Activated CD8-positive, alpha-beta T cell treated with anti-CD3 and anti-CD28 coated beads, Interleukin-2, amount 10 ng/mL, durations not matched to agents 7 days and 5 days (primary cell): ENCODE measurements at regions of chr16 and their contacts with region 1.

Region 1: GRCh38 chr16:84055366-84055765 is 12.8 kb upstream of the SLC38A8 start:
- DNase-seq: no peak
- ATAC-seq: no peak
- H3K4me3 Mint-ChIP-seq: no peak overlapping the region
- H3K27ac Mint-ChIP-seq: no peak overlapping the region
- H3K4me1 Mint-ChIP-seq: no peaks in the 10 kb centered on the region
- H3K27me3 Mint-ChIP-seq: no peaks in the 10 kb centered on the region

Region 2: DNA sequence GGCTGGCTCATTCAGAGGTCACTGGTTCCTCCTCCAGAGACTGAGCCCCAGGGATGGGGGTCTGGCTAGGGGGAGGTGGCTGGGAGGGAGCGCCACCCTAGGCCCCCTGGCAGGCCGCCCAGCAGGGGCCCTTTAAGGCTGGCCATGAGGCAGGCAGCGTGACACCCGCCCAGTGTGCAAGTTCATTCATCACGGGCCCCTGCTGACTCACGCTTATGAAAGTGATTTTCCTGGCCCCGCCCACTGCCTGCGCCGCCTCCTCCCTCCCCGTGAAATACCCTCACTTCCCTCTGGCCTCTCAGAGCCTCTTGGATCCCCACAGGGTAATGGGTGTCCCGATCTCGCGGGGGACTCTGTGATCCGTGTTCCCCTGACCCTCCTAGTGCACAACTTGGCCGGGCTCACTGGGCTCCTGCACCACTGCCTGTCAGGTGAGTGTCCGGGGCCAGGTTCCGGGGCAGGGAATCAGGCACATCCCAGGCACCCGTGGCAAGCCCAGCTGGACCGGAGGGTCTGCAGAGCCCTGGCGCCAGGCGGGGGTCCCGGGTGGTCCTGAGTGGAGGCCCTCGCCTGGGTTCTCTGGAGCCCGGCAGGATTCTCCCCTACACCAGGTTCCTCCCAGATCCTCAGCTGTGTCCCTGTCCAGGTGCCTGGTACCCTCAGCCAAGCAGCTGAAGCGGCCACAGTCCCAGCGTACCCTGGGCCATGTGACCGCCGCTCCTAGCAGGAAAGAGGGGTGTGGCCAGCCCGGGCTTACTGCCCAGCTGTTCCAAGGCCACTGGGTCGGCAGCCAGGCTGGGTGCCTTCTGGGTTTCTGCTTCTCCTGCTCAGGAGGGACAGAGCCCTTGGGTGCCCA is 102.2 kb before region 1 on chr16 and contains the start of gene OSGIN1:
- CTCF ChIA-PET with region 1: interaction called, 11 read pairs
- POLR2A ChIA-PET with region 1: no interaction called
- DNase-seq: peak; percentile 78
- ATAC-seq: peak; percentile 84
- H3K4me3 Mint-ChIP-seq: peak within 1 kb of the TSS; percentile 48
- H3K27ac Mint-ChIP-seq: no peak within 1 kb of the TSS
- H3K4me1 Mint-ChIP-seq: peaks cover 11% of the 10 kb centered on the region
- H3K27me3 Mint-ChIP-seq: peaks cover 5% of the 10 kb centered on the region
- total RNA-seq, gene OSGIN1: 0.24 to 0.26 TPM

Region 3: GRCh38 chr16:83996481-83997252 is 58.7 kb before region 1 on chr16:
- CTCF ChIA-PET with region 1: no interaction called
- POLR2A ChIA-PET with region 1: no interaction called
- DNase-seq: no peak
- ATAC-seq: no peak
- H3K4me3 Mint-ChIP-seq: no peak overlapping the region
- H3K27ac Mint-ChIP-seq: no peak overlapping the region
- H3K4me1 Mint-ChIP-seq: peaks cover 8% of the 10 kb centered on the region
- H3K27me3 Mint-ChIP-seq: peaks cover 28% of the 10 kb centered on the region

Region 4: GRCh38 chr16:84252184-84252583 is 196.8 kb after region 1 on chr16:
- CTCF ChIA-PET with region 1: no interaction called
- POLR2A ChIA-PET with region 1: no interaction called
- DNase-seq: no peak
- ATAC-seq: no peak
- H3K4me3 Mint-ChIP-seq: no peak overlapping the region
- H3K27ac Mint-ChIP-seq: no peak overlapping the region
- H3K4me1 Mint-ChIP-seq: no peaks in the 10 kb centered on the region
- H3K27me3 Mint-ChIP-seq: peaks cover 14% of the 10 kb centered on the region